ENCODE measurements at regions of chr1 and their contacts with region 1.

Region 1: DNA sequence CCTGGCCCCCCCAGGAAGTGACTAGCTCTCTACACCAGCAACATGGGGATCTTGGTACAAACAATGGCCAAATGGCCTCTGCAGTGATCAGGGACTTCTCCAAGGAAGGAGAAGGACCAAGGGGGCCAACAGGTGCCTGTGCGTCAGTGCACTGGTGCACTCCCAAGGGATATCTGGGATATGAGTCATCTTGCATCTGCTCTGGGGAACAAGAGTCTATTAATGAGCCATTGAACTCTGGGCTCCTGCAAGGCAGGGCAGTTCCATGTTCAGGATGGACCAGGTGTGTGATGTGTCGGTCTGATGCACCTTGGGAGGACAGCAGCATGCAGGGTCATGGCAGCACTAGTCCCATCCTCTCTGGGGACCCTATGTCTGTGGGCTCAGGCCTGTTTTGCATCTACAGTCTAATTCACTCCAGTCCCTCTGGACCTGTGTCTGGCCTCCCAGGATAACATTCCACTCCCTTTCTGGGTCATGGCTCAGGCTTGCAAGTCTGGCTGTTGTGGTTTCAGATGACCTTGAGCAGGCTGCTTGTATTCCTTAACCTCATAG is 125.3 kb downstream of the TRABD2B start:
- DNase-seq: peak; percentile 70
- H3K4me3 Mint-ChIP-seq: peak overlapping the region; percentile 39
- H3K27ac Mint-ChIP-seq: peak overlapping the region; percentile 76
- H3K4me1 Mint-ChIP-seq: peaks cover 70% of the 10 kb centered on the region
- H3K27me3 Mint-ChIP-seq: no peaks in the 10 kb centered on the region
- CTCF ChIP-seq: no peak

Region 2: DNA sequence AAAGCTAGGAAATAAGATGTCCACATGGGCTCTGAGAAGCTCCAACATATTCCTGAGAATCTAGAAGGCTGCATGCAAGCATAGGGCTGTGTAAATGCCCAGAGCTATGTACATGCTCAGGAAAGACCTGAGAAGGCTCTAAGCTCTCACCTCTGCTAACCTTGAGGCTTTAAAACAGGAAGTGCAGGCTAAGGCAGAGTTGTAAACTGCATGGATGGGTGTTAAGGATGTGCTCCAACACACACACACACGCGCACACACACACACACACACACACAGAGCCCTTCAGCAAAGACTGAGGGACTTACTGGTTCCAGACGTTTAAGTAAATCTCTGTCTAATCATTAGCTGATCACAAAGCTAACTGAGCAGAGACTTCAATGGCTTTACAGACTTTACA is 37.5 kb before region 1 on chr1:
- CTCF ChIA-PET with region 1: no interaction called
- intact Hi-C with region 1: no loop called
- DNase-seq: no peak
- H3K4me3 Mint-ChIP-seq: no peak overlapping the region
- H3K27ac Mint-ChIP-seq: no peak overlapping the region
- H3K4me1 Mint-ChIP-seq: no peaks in the 10 kb centered on the region
- H3K27me3 Mint-ChIP-seq: peaks cover 28% of the 10 kb centered on the region
- CTCF ChIP-seq: no peak

Region 3: DNA sequence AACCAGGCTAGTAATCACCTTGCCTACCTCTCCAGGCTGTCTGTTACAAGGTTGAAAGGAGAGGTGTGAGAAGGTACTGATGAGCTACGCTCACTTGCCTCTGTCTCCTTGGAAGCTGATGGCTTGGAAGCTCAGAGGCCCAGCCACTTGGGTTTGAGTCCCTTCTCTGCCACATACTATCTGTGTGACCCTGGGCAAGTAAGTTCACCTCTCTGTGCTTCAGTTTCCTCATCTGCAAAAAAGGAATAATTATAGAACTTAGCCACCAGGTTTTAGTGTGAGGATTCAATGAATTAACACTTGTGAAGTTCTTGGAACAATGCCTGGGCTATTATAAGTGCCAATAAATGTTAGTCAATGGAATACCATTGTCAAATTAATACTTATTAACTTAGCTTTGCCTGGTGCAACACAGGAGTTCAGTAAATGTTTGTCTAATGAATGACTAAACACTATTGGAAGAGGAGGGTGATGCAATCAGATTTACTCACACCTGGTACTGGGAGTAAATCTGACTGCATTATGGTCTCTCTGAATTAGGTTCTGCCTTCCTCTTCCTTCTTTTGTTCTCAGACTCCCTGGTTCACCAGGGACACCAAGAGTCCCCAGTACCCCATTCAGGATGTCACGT is 69.8 kb after region 1 on chr1:
- CTCF ChIA-PET with region 1: no interaction called
- intact Hi-C with region 1: loop called (anchors 5 kb)
- DNase-seq: peak; percentile 28
- H3K4me3 Mint-ChIP-seq: no peak overlapping the region
- H3K27ac Mint-ChIP-seq: peak overlapping the region; percentile 96
- H3K4me1 Mint-ChIP-seq: peaks cover 55% of the 10 kb centered on the region
- H3K27me3 Mint-ChIP-seq: no peaks in the 10 kb centered on the region
- CTCF ChIP-seq: peak; percentile 20

Region 4: GRCh38 chr1:48164571-48164970 is 292.7 kb after region 1 on chr1:
- CTCF ChIA-PET with region 1: no interaction called
- intact Hi-C with region 1: no loop called
- DNase-seq: no peak
- H3K4me3 Mint-ChIP-seq: no peak overlapping the region
- H3K27ac Mint-ChIP-seq: no peak overlapping the region
- H3K4me1 Mint-ChIP-seq: no peaks in the 10 kb centered on the region
- H3K27me3 Mint-ChIP-seq: peaks cover 35% of the 10 kb centered on the region
- CTCF ChIP-seq: no peak

Measured in Calu3 (cell line).